Head of caudate nucleus (tissue), 42 donors: ENCODE measurements at regions of chr6 and their contacts with region 1.

Region 1: DNA sequence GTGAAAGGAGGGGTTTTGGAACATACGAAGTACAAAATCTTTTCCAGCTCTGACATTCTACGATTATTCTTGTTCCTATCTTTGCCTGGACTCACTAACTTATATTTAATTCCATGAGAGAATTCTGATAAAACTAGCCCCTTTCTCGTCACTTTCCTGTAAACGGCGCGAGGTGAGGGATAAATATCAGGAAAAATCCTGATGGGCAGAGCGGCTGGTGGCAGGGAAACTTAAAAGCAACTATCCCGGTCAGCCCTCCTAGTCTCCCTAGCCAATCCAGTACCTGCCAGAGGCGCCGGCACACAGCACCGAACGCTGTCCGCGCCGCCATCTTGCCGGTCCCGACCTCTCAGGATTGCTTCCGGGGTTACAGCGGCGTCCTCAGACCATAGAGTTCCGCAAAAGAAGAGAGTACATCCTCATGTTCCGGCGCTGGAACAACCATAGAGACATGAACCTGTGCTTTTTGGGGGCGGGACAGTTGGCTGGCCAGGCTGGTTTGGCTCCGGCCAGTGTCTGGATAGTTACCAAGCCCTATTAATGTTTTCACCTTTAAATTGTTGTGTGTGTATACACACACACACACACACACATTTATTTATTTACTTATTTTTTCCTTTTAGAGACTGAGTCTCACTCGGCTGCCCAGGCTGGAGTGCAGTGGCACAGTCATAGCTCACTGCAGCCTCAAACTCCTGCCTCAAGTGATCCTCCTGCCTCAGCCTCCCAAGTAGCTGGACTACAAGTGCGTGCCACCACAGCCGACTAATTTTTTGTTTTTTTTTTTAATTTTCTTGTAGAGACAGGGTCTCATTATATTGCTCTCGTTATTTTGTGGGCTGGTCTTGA is at the start of gene MRPS10:
- DNase-seq: peak; percentile 89 to 98 (median 95)

Region 2: DNA sequence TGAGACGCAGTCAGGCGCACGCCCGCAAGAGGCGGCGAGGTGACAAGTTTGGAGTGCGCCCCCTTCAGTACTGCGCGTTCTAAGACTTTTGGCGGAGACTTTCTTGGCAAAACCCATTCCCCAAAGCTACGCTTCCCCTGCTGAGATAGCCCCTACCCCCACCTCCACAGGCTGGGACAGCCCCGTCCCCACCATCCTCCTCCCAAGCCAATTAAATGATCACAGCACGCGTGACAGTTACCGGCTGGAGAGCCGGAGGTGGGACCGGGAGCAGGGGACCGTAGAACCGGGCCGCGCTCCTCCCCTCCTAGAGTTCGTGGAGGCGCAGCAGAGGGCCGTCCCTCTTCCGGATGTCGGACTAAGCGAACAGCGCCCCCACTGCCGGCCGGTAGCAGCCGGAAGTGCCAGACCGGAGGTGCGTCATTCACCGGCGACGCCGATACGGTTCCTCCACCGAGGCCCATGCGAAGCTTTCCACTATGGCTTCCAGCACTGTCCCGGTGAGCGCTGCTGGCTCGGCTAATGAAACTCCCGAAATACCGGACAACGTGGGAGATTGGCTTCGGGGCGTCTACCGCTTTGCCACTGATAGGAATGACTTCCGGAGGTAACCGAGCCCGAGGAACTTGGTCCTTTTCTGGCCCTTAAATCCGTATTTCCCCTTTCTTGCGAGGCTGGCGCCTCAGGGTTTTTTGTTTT is 430.4 kb before region 1 on chr6 and contains the start of gene TOMM6:
- intact Hi-C with region 1: loop called (anchors 10 kb)
- DNase-seq: peak; percentile 85 to 99 (median 96)

Region 3: DNA sequence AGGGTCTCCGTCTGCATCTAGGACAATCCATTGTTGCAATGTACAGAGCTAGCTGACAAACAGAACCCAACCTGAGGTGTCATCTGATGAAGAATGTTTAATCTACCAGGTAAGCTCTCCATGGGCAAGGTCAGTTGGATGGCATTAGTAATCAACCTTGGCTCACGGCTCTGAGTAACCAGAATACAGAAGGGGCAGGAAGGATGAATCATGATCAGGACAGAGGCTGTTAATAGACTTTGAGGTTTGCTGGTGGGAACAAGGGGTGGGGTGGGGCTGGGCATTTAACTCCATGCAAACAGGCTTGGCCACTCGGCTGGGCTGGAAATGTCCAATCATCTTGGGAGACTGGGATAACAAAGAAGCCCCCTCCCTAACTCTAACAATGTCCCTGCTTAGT is 77.0 kb after region 1 on chr6:
- intact Hi-C with region 1: no loop called
- DNase-seq: no peak

Region 4: DNA sequence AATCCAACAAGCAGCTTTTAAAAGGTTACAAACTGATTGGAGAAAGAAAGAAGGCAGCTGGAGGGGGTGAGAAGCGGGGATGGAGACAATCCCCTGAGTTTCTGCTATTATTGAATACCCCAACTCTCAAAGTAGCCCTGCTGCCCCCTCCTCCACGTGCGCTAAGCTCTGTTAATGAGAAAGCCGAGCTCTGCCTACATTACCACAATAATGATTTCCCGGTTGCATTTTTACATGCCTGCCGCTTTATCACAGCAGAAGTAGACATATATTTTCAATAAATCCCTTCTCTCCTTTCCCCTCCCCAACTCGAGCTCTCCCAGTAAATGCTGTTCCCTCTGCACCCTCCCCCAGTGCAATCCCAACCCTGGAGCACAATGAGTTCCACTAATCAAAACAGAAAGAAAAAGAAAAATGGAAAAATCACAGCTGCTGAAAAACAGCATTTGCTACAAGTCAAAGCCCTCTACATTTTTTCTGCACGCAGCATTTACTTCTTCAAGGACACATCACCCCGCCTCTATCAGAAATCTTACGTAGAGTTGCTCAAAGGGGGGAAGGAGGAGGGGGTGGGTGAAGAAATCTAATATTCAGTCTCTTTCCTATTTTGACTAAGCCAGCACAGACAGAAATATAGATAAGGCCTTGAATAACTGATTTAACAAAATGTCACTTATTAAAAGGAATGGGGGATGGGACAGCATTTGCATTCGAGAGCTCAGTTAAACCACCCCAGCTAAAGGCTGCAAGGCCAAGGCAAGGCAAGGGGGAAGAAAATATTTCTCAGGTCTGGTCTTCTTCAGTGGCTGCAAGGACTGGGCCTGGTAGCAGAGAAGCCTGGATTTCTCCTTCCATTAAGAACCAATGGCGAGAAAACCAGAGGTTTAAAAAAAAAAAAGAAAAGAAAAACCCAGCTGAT is 223.3 kb after region 1 on chr6:
- intact Hi-C with region 1: no loop called
- DNase-seq: peak in 10 of 42 donors; percentile 23 to 60 (median 40)

Region 5: GRCh38 chr6:42547407-42548329 is 329.9 kb after region 1 on chr6:
- intact Hi-C with region 1: loop called (anchors 10 kb)
- DNase-seq: peak; percentile 82 to 96 (median 92)